ENCODE measurements at regions of chr9 and their contacts with region 1.

Region 1: GRCh38 chr9:6106576-6107339 is 91.3 kb upstream of the RANBP6 start:
- DNase-seq: peak; percentile 47
- CTCF ChIP-seq: peak; percentile 33

Region 2: GRCh38 chr9:6123416-6123815 is 16.7 kb after region 1 on chr9:
- CTCF ChIA-PET with region 1: interaction called, 10 read pairs
- POLR2A ChIA-PET with region 1: no interaction called
- DNase-seq: no peak
- CTCF ChIP-seq: no peak

Measured in GM10248 (cell line).